AG04449 (cell line): ENCODE measurements at regions of chr19 and their contacts with region 1.

Region 1: DNA sequence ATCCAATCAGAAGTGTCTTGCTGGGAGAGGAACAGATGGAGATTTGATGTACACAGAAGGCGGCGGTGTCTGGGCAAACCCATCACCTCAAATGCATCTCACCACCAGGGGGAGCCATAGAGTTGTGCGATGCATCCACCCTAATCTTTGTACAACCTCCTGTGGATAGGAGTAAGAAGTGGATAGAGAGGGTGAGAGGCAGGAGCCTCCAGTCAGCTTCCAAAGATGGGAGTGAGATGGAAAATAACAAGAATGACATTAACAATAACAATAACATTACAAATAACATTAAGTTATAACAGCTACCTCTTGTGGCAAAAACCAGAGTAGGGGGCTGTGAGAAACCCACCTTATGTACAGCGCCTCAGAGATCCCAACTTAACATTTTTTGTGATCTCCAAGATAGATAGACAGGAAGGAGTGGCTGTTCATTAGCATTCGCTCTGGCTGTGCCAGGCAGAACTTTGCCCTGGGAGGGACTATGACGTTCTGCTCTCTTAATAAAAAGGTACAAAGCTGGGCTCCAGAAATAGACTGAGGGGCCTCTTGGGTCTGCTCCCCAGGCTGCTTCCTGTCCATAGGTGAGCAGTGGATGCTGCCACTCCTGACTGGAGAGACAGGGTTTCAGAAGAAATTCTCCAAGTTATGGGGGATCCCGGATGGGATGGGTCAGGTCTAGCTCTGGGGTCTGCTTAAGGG is 5.2 kb upstream of the CEACAM18 start:
- DNase-seq: no peak
- H3K4me3 ChIP-seq: no peak overlapping the region
- CTCF ChIP-seq: peak; percentile 85

Region 2: DNA sequence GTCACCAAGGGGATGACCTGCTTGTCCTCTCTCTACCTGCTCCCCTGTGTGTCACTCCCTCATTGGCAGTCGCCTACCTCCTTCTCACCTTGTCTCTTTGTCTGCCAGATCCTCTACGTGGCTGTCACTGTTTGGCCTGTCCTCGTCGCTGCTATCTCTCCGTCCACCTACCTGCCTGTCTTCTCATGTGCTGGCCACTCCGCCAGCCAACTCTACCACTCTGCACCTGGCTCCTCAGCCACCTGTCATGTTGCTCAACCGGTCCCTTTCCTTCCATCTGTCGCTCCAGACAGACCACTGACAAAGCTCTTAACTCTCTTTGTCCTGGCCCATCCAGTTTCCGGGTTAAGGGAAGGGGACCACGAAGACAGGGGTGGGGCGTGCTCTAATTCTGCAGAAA is 438.4 kb before region 1 on chr19 and contains the start of gene KLK12:
- CTCF ChIA-PET with region 1: no interaction called
- POLR2A ChIA-PET with region 1: no interaction called
- DNase-seq: no peak
- H3K4me3 ChIP-seq: no peak within 1 kb of the TSS
- CTCF ChIP-seq: no peak

Region 3: DNA sequence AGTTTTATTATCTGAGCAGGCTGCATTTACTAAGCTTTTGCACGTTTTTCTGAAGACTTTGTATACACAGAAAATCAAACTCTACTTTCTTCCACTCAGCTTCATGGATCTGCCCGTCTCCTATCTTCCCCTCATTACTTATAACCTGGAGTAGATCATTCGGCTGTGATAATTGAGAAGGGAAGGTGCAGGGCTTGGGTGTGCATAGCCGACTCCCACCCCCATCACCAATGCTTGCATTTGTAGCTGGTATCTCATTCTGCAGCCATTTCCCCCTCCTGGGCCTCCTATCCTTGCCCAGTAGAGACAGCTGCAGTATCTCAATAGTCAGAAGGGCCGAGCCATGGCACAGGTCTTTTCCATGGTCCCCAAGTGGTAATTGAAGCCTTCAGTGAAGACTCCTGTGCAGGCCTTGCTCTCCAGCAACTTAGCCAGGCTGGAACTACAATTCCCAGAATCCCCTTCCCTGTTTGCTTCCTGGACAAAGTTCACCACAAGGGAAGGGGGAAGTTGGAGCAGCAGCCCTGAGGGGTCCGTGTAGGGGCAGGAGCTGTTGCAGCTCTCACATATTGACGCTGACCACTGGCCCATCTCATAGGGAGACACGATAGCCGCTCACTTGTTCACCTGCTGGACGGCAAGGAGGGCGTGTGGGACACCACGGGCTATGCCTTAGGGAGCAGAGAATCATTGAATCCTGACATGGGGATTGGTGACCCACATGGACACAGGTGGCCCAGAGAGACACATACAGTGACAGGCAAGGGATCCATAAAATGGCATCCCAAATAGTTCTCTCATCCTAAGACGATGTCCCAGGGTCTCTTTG is 12.8 kb before region 1 on chr19:
- CTCF ChIA-PET with region 1: interaction called, 14 read pairs
- POLR2A ChIA-PET with region 1: no interaction called
- DNase-seq: no peak
- H3K4me3 ChIP-seq: no peak overlapping the region
- CTCF ChIP-seq: no peak

Region 4: GRCh38 chr19:51607920-51608562 is 134.9 kb after region 1 on chr19:
- CTCF ChIA-PET with region 1: no interaction called
- POLR2A ChIA-PET with region 1: no interaction called
- DNase-seq: no peak
- H3K4me3 ChIP-seq: no peak overlapping the region
- CTCF ChIP-seq: peak; percentile 82

Region 5: DNA sequence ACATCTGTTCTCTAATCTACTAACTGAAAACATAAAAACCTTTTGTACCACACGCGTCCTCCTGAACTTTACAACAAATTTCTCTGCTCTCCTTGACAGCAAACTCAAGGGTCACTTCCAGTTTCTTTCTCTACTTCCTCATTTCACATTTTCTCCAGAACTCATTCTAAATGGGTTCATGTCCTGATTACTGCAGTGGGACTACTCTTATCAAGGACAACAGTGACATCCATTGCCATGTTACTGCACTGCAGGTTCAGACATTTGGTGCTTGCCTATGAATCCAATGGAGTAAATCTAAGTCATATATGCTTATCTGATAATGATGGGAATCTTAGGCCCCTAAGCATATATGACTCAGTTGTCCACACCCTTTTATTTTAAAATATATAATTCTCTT is 357.1 kb after region 1 on chr19:
- CTCF ChIA-PET with region 1: no interaction called
- POLR2A ChIA-PET with region 1: no interaction called
- DNase-seq: no peak
- H3K4me3 ChIP-seq: no peak overlapping the region
- CTCF ChIP-seq: no peak